Psoas muscle (tissue), 8 donors: ENCODE measurements at regions of chr1 and their contacts with region 1.

Region 1: GRCh38 chr1:1890506-1891348 is at the start of gene GNB1:
- DNase-seq: peak; percentile 90 to 95
- ATAC-seq: peak; percentile 91 to 92 (median 92)
- H3K4me3 ChIP-seq: peak within 1 kb of the TSS; percentile 97
- H3K27ac ChIP-seq: peak within 1 kb of the TSS; percentile 88
- H3K4me1 ChIP-seq: peaks cover 54% of the 10 kb centered on the region
- H3K27me3 ChIP-seq: no peaks in the 10 kb centered on the region
- CTCF ChIP-seq: no peak
- total RNA-seq, gene GNB1: 68.0 to 90.3 (median 75.9) TPM

Region 2: DNA sequence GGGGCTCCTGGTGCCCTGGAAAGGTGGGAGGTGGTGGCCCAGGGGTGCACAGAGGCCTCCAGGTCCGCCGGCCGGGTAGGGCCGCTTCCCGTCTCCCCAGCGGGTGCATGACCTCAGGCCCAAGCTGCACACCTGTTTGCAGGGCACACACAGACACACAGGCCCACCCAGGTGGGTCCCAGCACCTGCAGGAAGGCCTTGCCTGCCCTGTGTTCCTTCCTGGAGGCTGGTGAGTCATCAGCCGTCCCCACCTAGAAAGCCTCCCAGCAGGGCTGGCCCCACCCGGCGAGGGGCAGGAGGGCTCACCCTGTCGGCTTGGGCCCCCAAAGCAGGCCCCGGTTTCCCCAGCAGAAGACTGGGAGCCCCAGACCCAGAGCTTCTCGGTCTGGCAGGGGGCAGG is 740.6 kb before region 1 on chr1:
- intact Hi-C with region 1: no loop called
- DNase-seq: no peak
- ATAC-seq: no peak
- H3K4me3 ChIP-seq: no peak overlapping the region
- H3K27ac ChIP-seq: no peak overlapping the region
- H3K4me1 ChIP-seq: no peaks in the 10 kb centered on the region
- H3K27me3 ChIP-seq: peaks cover 0 to 16% (median 0%) of the 10 kb centered on the region in 3 donors
- CTCF ChIP-seq: no peak

Region 3: DNA sequence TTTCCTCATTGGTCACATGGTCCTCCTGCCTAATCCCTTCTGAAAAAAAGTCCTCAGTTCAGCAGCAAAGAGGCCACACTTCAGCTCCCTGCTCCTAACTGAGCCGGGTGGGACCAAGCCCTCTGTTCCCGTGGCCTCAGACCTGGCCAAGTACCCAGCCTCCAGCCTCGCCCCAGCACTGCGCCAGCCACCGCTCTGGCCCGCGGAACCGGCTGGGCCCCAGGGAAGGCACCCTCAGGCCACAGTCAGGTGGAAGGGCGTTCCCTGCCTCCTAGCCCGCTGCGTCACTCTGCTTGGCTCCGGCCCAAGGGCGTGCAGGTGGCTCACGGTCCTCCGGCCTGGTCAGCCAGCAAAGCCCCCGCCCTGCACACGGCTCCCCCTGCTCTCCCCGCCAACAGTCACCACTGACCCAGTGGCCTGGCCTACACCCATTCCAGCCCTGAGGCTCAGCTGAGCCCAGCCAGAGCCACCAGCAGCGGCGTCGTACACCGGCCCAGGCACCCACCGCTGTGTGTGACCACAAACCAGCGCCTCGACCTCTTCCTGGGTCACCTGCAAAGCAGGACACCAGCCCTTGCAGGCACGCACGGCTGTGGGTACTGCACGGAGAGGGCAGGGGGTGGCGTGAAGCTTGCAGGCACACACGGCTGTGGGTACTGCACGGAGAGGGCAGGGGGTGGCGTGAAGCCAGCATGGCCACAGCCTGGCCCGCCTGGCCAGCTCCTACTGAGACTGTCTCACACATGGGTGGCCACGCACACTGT is 131.9 kb before region 1 on chr1:
- intact Hi-C with region 1: loop called in 1 of 2 experiments (anchors 5 kb)
- DNase-seq: peak; percentile 73 to 82
- ATAC-seq: peak; percentile 62 to 73 (median 71)
- H3K4me3 ChIP-seq: no peak overlapping the region
- H3K27ac ChIP-seq: peak overlapping the region; percentile 69
- H3K4me1 ChIP-seq: peaks cover 18% of the 10 kb centered on the region
- H3K27me3 ChIP-seq: no peaks in the 10 kb centered on the region
- CTCF ChIP-seq: no peak

Region 4: GRCh38 chr1:1777950-1778662 is 112.6 kb before region 1 on chr1 and contains the start of gene NADK:
- intact Hi-C with region 1: loop called in 1 of 2 experiments (anchors 5 kb)
- DNase-seq: peak; percentile 74 to 84
- ATAC-seq: peak; percentile 70 to 77 (median 75)
- H3K4me3 ChIP-seq: peak within 1 kb of the TSS; percentile 91
- H3K27ac ChIP-seq: peak within 1 kb of the TSS; percentile 94
- H3K4me1 ChIP-seq: peaks cover 43% of the 10 kb centered on the region
- H3K27me3 ChIP-seq: no peaks in the 10 kb centered on the region
- CTCF ChIP-seq: no peak
- total RNA-seq, gene NADK: 19.1 to 37.7 (median 28.7) TPM

Region 5: GRCh38 chr1:2019172-2019543 is 128.4 kb after region 1 on chr1 and contains the start of gene GABRD:
- intact Hi-C with region 1: no loop called
- DNase-seq: no peak
- ATAC-seq: no peak
- H3K4me3 ChIP-seq: peak within 1 kb of the TSS; percentile 15
- H3K27ac ChIP-seq: no peak within 1 kb of the TSS
- H3K4me1 ChIP-seq: no peaks in the 10 kb centered on the region
- H3K27me3 ChIP-seq: peaks cover 0 to 89% (median 33%) of the 10 kb centered on the region in 3 donors
- CTCF ChIP-seq: no peak
- total RNA-seq, gene GABRD: 0.24 to 0.47 TPM in 2 of 4 donors, not detected in the others